Thyroid gland (tissue), 4 donors: ENCODE measurements at regions of chr2 and their contacts with region 1.

Region 1: DNA sequence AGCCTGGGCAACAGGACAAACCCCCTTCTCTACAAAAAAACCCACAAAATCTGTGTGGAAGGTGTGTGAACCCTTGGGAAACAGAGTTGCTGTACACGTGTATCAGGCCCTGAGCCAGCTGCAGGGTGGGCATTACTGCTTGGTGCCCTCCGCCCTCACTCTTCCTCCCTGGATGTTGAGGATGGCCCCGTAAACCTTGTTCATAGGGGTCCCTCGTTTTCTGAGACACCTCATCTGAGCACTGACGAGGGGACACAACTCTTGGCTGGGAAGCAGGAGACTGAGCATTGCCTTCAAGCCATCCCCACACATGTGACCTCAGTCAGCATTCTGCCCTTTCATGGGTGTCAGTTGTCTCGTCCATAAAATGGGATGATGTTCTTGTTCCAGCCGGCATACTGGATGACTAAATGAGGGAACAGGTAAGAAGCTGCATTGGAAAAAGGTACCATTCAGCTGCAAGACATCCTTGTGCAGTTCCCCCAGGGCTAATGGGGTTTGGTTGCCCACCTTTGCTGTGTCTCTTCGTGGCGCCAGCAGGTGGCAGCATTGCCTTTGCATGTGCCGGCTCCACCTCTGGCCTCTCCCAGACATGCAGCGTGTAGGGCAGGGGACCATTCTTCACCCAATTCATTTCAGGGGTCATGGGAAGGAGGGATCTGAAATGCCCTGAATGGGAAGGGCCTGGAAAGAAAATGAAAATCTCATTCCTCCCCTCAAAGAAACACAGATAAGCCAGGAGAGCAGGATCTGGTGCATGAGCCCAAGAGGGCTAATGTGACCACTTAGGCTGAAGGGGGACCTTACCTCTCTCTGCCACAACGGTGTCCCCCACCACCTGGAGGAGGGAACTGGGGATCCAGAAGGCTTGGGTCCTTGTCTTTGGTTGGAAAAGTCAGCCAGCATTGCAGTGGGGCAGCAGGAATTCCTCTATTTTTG is 36.4 kb upstream of the HAAO start:
- DNase-seq: peak; percentile 68 to 74
- H3K4me3 ChIP-seq: no peak overlapping the region
- H3K27ac ChIP-seq: no peak overlapping the region
- H3K4me1 ChIP-seq: peaks cover 7 to 16% of the 10 kb centered on the region in 2 donors
- H3K27me3 ChIP-seq: no peaks in the 10 kb centered on the region
- CTCF ChIP-seq: peak; percentile 73 to 93 (median 88)
- POLR2A ChIP-seq: no peak

Region 2: GRCh38 chr2:43219383-43220228 is 390.9 kb after region 1 on chr2:
- intact Hi-C with region 1: loop called (anchors 5 kb)
- DNase-seq: peak; percentile 92 to 94
- H3K4me3 ChIP-seq: peak overlapping the region in 1 of 3 donors; percentile 99
- H3K27ac ChIP-seq: peak overlapping the region; percentile 99 to 100 (median 100)
- H3K4me1 ChIP-seq: peaks cover 30 to 41% of the 10 kb centered on the region in 2 donors
- H3K27me3 ChIP-seq: no peaks in the 10 kb centered on the region
- CTCF ChIP-seq: no peak
- POLR2A ChIP-seq: peak in 1 of 2 donors; percentile 64

Region 3: DNA sequence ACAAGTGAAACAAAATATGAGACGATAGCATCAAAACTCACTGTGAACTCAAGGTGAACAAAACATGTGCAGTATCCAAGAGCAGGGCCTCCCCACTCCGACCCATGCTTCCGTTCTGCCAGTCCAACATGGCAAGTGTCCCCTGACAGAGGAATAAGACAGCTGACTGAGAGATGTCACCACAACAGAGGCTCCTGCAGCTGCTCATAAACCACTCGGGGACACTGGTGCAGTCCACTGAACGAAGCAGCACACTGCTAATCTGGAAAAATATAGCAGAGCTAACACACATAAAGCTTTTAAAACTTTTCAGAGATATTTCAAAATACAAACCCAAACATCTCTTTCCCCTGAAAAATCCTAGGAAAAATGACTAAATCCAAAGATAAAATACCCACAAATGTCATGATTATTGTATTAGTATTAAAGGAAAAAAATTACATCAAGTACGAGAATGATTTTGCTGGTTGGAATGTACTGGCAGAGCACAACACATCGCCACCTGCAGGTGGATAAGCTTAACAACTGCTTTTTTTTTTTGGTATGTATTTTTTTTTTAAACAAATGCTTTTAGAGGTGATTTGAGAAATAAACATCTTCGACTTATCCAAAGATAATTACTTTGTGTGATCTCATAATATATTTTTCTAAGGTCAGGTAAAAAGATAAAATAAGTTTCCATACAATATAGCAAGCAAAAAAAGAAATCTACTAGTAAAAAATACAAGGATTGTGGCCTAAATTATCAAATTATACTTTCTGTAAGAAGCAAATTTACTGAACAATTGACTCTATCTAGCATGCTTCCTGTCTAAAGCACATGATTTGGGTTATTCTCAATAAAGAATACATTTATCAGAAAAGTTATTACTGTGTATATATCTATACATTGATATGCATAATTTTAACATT is 748.5 kb after region 1 on chr2:
- intact Hi-C with region 1: loop called (anchors 10 kb)
- DNase-seq: peak; percentile 18 to 35
- H3K4me3 ChIP-seq: no peak overlapping the region
- H3K27ac ChIP-seq: no peak overlapping the region
- H3K4me1 ChIP-seq: no peaks in the 10 kb centered on the region
- H3K27me3 ChIP-seq: no peaks in the 10 kb centered on the region
- CTCF ChIP-seq: peak; percentile 44 to 84 (median 63)
- POLR2A ChIP-seq: no peak

Region 4: GRCh38 chr2:43609290-43609937 is 780.7 kb after region 1 on chr2:
- intact Hi-C with region 1: loop called (anchors 10 kb)
- DNase-seq: peak; percentile 16 to 33
- H3K4me3 ChIP-seq: no peak overlapping the region
- H3K27ac ChIP-seq: no peak overlapping the region
- H3K4me1 ChIP-seq: no peaks in the 10 kb centered on the region
- H3K27me3 ChIP-seq: no peaks in the 10 kb centered on the region
- CTCF ChIP-seq: peak; percentile 36 to 69 (median 58)
- POLR2A ChIP-seq: no peak